ENCODE measurements at regions of chr5 and their contacts with region 1.

Region 1: DNA sequence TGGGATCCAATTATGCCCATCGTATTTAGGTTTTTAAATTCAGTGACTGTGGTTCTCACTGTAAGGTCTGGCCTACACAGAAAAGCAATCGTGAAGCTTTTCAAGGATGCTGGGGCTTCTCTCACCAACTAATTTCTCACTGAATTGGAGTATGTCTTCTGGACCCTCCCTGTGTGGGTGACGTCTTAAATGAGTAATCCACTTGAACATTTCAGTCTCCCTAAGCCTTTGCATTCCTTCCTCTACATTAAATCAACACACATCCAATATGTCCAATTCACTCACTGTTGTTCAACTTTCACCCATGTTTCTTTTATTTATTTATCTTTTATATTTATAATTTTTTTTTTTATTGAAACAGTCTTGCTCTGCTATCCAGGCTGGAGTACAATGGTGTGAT is 12.5 kb upstream of the BTF3 start:
- DNase-seq: no peak
- ATAC-seq: no peak
- H3K4me3 Mint-ChIP-seq: no peak overlapping the region
- H3K27ac Mint-ChIP-seq: peak overlapping the region; percentile 80; the same call in 1 of the 2 replicates
- H3K4me1 Mint-ChIP-seq: peaks cover 60% of the 10 kb centered on the region
- H3K27me3 Mint-ChIP-seq: no peaks in the 10 kb centered on the region
- CTCF ChIP-seq: no peak

Region 2: GRCh38 chr5:73454351-73455036 is 31.2 kb before region 1 on chr5:
- CTCF ChIA-PET with region 1: interaction called, 27 read pairs
- POLR2A ChIA-PET with region 1: interaction called, 3 read pairs
- DNase-seq: peak; percentile 83
- ATAC-seq: peak; percentile 93
- H3K4me3 Mint-ChIP-seq: no peak overlapping the region
- H3K27ac Mint-ChIP-seq: peak overlapping the region; percentile 70
- H3K4me1 Mint-ChIP-seq: peaks cover 25% of the 10 kb centered on the region
- H3K27me3 Mint-ChIP-seq: peaks cover 49% of the 10 kb centered on the region
- CTCF ChIP-seq: peak; percentile 48; the same call in 1 of the 2 replicates

Region 3: DNA sequence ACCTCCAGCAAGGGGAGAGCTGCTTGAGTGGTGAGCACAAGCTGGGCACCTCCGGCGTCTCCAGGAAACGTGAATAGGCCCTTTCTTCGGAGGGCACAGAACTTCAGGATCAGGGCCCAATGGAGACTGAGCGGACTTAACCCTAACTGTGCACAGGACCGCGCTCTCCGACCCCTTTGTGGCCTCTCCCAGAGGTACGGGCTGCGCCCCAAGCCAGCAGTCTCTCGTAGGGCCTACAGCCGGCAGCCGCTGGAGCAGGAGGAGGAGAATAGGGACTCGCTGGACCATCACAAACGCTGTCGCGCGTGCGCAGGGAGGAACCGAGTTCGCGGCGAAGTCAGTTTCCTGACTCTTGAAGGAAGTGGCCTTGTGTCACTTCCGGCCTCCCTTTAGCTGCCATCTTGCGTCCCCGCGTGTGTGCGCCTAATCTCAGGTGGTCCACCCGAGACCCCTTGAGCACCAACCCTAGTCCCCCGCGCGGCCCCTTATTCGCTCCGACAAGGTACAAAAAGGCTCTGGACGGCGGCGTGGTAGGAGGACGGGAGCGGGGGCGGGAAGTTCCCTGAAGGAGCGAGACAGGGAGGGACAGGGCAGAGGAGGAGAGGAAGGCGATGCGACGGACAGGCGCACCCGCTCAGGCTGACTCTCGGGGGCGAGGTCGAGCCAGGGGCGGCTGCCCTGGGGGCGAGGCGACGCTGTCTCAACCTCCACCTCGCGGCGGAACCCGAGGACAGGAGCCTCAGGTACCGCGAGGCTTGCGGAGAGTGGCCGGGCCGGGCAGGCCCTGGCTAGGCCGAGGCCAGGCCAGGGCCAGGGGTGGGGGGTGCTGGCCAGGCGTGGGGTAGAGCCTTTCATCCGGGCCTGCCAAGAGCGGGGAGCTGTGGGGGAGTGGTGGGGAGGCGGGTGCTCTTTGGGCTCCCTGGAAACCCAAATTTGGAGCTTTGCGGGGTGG is 12.6 kb after region 1 on chr5 and contains the start of gene BTF3:
- CTCF ChIA-PET with region 1: interaction called, 10 read pairs
- POLR2A ChIA-PET with region 1: interaction called, 21 read pairs
- DNase-seq: peak; percentile 89
- ATAC-seq: peak; percentile 86
- H3K4me3 Mint-ChIP-seq: peak within 1 kb of the TSS; percentile 91
- H3K27ac Mint-ChIP-seq: peak within 1 kb of the TSS; percentile 96
- H3K4me1 Mint-ChIP-seq: peaks cover 49% of the 10 kb centered on the region
- H3K27me3 Mint-ChIP-seq: no peaks in the 10 kb centered on the region
- CTCF ChIP-seq: no peak
- total RNA-seq, gene BTF3: 736 to 764 TPM (median 736 TPM) in 3 replicates